GM23248 (cell line): ENCODE measurements at regions of chr6 and their contacts with region 1.

Region 1: GRCh38 chr6:113858480-113859348 is 1.6 kb downstream of the MARCKS start:
- DNase-seq: peak; percentile 95
- H3K4me3 ChIP-seq: peak overlapping the region; percentile 100
- H3K27ac ChIP-seq: peak overlapping the region; percentile 100
- H3K4me1 ChIP-seq: peaks cover 22% of the 10 kb centered on the region
- H3K27me3 ChIP-seq: no peaks in the 10 kb centered on the region

Region 2: GRCh38 chr6:113414511-113414910 is 444.2 kb before region 1 on chr6:
- in situ Hi-C with region 1: loop called (anchors 10 kb)
- DNase-seq: peak; percentile 91
- H3K4me3 ChIP-seq: no peak overlapping the region
- H3K27ac ChIP-seq: peak overlapping the region; percentile 72
- H3K4me1 ChIP-seq: peaks cover 49% of the 10 kb centered on the region
- H3K27me3 ChIP-seq: no peaks in the 10 kb centered on the region

Region 3: DNA sequence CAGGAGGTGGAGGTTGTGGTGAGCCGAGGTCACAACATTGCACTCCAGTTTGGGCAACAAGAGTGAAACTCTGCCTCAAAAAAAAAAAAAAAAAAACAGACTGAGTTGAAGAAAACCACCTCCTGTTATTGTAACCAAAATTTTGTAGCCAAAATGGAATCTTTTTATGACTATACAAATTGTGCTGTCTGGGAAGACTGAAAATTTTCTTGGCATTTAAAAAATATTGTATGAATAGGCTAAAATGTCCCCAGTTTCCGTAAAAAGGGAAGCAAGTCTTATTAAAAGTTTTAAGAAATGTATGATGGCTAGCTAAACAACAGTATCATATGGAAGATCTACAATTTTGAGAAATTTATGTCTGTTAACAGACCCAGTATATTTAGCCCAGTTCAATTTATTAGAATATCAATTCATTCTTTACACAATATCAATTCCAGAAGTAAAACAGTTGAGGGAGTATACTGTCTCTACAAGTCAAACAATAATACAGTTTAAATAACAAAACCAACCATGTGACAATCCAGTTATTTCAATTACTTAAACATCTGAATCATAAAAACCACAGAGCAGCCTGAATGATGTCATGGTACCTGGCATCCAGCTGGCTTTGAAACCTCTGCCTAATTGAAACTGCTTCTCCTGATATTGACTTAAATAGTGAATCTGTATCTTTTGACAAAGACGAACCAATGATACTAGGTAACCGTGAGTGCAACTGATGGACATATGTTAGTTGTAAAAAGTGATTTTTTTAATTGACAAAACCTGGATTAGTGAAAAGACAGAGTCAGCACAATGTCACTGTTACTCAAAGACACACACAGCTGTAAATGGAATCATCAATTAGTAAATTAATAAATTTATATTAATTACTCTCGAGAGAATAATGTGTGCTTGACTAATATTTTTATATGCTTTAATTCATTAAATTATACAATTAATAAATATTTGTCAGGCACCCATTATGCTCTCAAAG is 168.1 kb before region 1 on chr6:
- in situ Hi-C with region 1: loop called (anchors 10 kb)
- DNase-seq: peak; percentile 88
- H3K4me3 ChIP-seq: no peak overlapping the region
- H3K27ac ChIP-seq: no peak overlapping the region
- H3K4me1 ChIP-seq: peaks cover 30% of the 10 kb centered on the region
- H3K27me3 ChIP-seq: no peaks in the 10 kb centered on the region

Region 4: DNA sequence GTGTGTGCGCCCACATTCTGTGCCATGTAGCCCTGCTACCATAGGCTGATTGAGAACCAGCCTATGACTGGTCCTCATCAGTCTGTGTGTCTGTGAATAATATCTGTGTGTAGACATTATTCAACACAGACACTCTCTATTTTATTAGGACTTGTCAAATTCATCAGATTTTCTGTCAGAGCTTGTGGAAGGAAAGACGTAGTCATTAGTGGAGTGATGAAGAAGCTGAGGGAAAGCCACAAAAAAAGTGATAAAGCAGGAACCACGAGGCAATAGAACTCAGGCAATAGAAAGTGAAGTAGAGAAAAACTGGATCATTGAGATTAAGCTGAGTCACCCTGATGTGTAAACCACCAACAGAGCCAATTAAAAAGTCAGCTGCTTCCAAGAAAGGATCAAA is 123.7 kb before region 1 on chr6:
- in situ Hi-C with region 1: no loop called
- DNase-seq: peak; percentile 60
- H3K4me3 ChIP-seq: no peak overlapping the region
- H3K27ac ChIP-seq: no peak overlapping the region
- H3K4me1 ChIP-seq: peaks cover 8% of the 10 kb centered on the region
- H3K27me3 ChIP-seq: no peaks in the 10 kb centered on the region